ENCODE measurements at regions of chr14 and their contacts with region 1.

Region 1: GRCh38 chr14:20799892-20800544 is 2.6 kb downstream of the RNASE1 start:
- DNase-seq: peak; percentile 90
- H3K4me3 ChIP-seq: peak overlapping the region in 2 of 3 experiments; percentile 32
- H3K27ac ChIP-seq: peak overlapping the region; percentile 82
- H3K4me1 ChIP-seq: peaks cover 46% of the 10 kb centered on the region
- H3K27me3 ChIP-seq: no peaks in the 10 kb centered on the region
- CTCF ChIP-seq: no peak
- POLR2A ChIP-seq: no peak

Region 2: DNA sequence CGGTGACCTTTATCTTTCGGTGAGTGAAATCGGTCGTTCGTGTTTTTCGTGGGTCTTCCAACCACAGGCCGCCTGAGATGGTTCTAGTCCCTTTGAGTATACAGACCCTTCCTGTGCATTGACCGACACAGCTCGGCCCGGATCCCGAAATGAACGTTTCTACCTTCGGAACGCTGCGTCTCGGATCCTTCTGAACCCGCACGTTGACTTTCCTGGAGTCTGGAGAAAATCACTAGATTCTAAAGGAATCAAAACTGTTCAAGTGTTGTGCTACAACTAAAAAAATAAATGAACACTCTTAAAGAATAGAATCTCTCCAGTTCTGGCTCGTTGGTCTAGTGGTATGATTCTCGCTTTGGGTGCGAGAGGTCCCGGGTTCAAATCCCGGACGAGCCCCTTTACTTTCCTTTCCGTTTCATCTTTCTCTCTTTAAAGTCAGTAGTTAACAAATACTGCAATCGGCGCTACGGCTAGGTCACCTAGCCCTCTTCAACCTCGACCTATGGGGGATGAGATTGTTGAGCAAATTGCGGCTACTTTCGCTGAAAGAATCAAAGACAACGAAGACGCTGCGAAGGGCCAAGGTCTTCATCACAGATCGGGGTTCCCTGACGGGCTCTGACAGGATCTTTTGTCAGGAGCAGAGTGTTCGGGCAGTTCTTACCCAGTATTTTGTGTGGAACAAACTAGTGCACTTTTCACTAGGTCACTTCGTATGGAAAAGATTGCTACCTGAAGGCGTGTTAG is 167.2 kb before region 1 on chr14:
- CTCF ChIA-PET with region 1: no interaction called
- POLR2A ChIA-PET with region 1: no interaction called
- dilution Hi-C with region 1: no loop called
- intact Hi-C with region 1: loop called (anchors 5 kb)
- DNase-seq: peak; percentile 61
- H3K4me3 ChIP-seq: peak overlapping the region in 2 of 3 experiments; percentile 17 to 49
- H3K27ac ChIP-seq: no peak overlapping the region
- H3K4me1 ChIP-seq: peaks cover 24% of the 10 kb centered on the region
- H3K27me3 ChIP-seq: peaks cover 19 to 36% of the 10 kb centered on the region in 2 experiments
- CTCF ChIP-seq: no peak
- POLR2A ChIP-seq: no peak

Region 3: DNA sequence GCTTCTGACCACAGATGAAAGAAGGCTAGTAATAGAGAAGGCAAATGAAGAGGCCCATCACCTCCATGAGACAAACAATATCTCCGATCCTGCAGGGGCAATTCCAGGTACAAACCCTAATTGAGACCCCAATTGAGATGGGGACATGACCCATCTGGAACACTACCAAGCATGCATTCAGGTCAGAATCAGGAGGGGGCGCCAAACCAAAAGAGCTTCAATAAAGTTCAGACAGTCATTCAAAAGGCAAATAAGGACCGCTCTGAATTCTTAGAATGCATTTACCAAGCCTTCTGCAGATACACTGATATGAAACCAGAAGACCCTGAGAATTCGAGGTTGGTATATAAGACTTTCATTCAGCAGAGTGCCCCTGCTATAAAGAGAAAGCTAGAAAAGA is 42.1 kb before region 1 on chr14:
- CTCF ChIA-PET with region 1: interaction called, 10 read pairs
- POLR2A ChIA-PET with region 1: interaction called, 3 read pairs
- dilution Hi-C with region 1: no loop called
- intact Hi-C with region 1: no loop called
- DNase-seq: peak; percentile 51
- H3K4me3 ChIP-seq: no peak overlapping the region
- H3K27ac ChIP-seq: no peak overlapping the region
- H3K4me1 ChIP-seq: no peaks in the 10 kb centered on the region
- H3K27me3 ChIP-seq: peaks cover 7% of the 10 kb centered on the region in 2 experiments
- CTCF ChIP-seq: peak; percentile 43 to 59
- POLR2A ChIP-seq: no peak

Region 4: GRCh38 chr14:20789230-20789813 is 10.7 kb before region 1 on chr14:
- CTCF ChIA-PET with region 1: interaction called, 6 read pairs
- POLR2A ChIA-PET with region 1: no interaction called
- dilution Hi-C with region 1: no loop called
- intact Hi-C with region 1: loop called (anchors 1 kb)
- DNase-seq: peak; percentile 85
- H3K4me3 ChIP-seq: no peak overlapping the region
- H3K27ac ChIP-seq: no peak overlapping the region
- H3K4me1 ChIP-seq: peaks cover 18% of the 10 kb centered on the region
- H3K27me3 ChIP-seq: no peaks in the 10 kb centered on the region
- CTCF ChIP-seq: no peak
- POLR2A ChIP-seq: no peak

Region 5: DNA sequence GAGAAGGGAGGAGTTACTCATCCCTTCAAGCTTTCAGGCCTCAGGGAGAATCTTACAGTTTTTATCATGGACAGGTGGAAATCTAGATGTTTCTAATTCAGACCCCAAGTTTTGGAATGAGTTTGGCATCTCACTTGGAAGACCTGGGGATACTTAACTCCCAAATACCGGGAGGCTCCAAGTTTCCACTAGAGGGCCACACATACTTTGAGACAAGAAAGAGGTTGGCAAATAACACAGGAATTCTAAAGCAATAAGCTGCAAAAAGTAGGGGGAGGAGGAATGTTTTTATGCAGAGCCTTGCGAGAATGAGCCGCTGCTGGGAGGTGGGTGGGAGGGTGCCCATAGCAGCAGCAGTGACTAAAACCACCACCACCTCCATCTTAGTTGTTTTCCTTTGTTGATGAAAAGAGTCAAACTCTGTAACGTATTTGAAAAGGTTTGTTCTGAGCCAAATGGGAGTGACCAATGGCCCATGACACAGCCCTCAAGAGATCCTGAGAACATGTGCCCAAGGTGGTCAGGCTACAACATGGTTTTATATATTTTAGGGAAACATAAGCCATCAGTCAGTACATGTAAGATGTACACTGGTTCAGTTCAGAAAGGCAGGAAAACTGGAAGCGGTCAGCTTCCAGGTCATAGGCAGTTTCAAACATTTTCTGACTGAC is 36.8 kb after region 1 on chr14:
- CTCF ChIA-PET with region 1: interaction called, 15 read pairs
- POLR2A ChIA-PET with region 1: no interaction called
- dilution Hi-C with region 1: no loop called
- intact Hi-C with region 1: no loop called
- DNase-seq: peak; percentile 47
- H3K4me3 ChIP-seq: no peak overlapping the region
- H3K27ac ChIP-seq: no peak overlapping the region
- H3K4me1 ChIP-seq: no peaks in the 10 kb centered on the region
- H3K27me3 ChIP-seq: no peaks in the 10 kb centered on the region
- CTCF ChIP-seq: peak; percentile 42 to 55
- POLR2A ChIP-seq: no peak

Measured in endothelial cell of umbilical vein (primary cell).